PC-9 (cell line): ENCODE measurements at regions of chr3 and their contacts with region 1.

Region 1: DNA sequence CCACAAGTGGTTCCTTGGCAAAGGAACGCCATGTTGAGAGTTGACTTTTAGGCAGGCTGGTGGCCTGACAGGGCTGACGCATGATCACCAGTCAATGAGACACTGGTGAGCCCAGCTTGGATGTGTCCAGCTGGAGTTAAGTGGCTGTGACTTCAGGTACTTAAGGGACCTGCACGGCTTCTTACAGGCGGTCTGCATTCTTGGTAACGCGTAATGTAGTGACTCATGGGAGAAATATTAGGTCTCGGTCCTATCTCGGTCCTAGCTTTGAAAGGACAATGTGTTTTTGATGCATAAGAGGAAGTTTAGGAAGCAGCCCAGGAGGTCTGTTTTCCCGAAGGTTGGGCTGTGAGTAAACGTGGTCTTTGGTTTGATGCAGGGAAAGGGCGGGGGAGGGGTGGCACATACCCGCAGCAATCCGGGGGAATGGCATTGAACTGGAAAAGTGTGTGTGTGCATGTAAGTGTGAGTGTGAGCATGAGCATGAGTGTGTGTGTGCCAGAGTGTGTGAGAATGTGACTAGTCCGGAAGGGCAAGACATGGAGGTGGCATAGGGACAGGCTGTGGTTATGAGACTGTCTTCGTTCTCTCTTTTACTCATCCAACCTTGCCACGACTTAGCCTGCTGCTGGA is 55.3 kb downstream of the FAM43A start:
- DNase-seq: peak; percentile 86 to 100
- H3K4me3 ChIP-seq: peak overlapping the region; percentile 30; the same call in 1 of the 2 replicates
- H3K27ac ChIP-seq: peak overlapping the region; percentile 80
- H3K4me1 ChIP-seq: peaks cover 42% of the 10 kb centered on the region
- H3K27me3 ChIP-seq: no peaks in the 10 kb centered on the region
- CTCF ChIP-seq: no peak

Region 2: GRCh38 chr3:194730321-194730744 is 10.6 kb before region 1 on chr3:
- CTCF ChIA-PET with region 1: interaction called, 6 read pairs
- POLR2A ChIA-PET with region 1: interaction called, 16 read pairs
- intact Hi-C with region 1: no loop called
- DNase-seq: peak in 1 of 2 experiments; percentile 80
- H3K4me3 ChIP-seq: no peak overlapping the region
- H3K27ac ChIP-seq: no peak overlapping the region
- H3K4me1 ChIP-seq: no peaks in the 10 kb centered on the region
- H3K27me3 ChIP-seq: no peaks in the 10 kb centered on the region
- CTCF ChIP-seq: no peak

Region 3: GRCh38 chr3:194841066-194841841 is 100.3 kb after region 1 on chr3:
- CTCF ChIA-PET with region 1: no interaction called
- POLR2A ChIA-PET with region 1: interaction called, 24 read pairs
- intact Hi-C with region 1: no loop called
- DNase-seq: peak; percentile 75 to 81
- H3K4me3 ChIP-seq: peak overlapping the region; percentile 32; the same call in 1 of the 2 replicates
- H3K27ac ChIP-seq: peak overlapping the region; percentile 7; the same call in 1 of the 2 replicates
- H3K4me1 ChIP-seq: peaks cover 13% of the 10 kb centered on the region
- H3K27me3 ChIP-seq: no peaks in the 10 kb centered on the region
- CTCF ChIP-seq: no peak

Region 4: DNA sequence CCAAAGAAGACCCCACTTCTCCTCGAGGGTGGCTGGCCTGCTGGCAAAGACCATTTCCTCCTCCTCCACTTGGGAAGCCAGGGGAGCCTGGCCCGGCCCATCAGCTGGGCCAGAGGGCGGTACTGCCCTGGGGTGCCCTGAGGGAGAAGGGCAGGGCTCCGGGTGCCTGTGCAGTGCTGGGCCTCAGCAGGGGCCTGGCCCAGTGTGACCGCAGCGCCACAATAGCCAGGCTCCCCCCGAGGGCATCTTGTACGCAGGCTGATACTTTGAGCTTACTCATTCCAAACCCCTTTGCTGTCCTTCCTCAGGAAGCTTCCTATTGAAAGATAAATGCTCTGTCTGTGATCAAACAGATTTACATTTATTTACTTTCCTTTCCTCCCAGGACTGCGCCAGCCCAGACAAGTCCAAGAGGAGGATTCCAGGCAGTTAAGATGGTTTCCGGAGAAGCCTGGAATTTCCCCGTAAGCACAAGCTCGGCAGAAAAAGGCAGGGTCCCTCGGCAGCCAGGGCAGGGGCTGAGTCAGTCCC is 289.9 kb after region 1 on chr3:
- CTCF ChIA-PET with region 1: interaction called, 13 read pairs
- POLR2A ChIA-PET with region 1: no interaction called
- intact Hi-C with region 1: loop called (anchors 1 kb)
- DNase-seq: peak; percentile 98
- H3K4me3 ChIP-seq: peak overlapping the region; percentile 28; the same call in 1 of the 2 replicates
- H3K27ac ChIP-seq: peak overlapping the region; percentile 83
- H3K4me1 ChIP-seq: peaks cover 53% of the 10 kb centered on the region
- H3K27me3 ChIP-seq: no peaks in the 10 kb centered on the region
- CTCF ChIP-seq: no peak